ENCODE measurements at regions of chr17 and their contacts with region 1.

Region 1: GRCh38 chr17:50783193-50783660 is 15.9 kb upstream of the ANKRD40CL start:
- DNase-seq: peak; percentile 74 to 94 (median 89)
- ATAC-seq: peak; percentile 85 to 95 (median 92)
- H3K4me3 ChIP-seq: no peak overlapping the region
- H3K27ac ChIP-seq: no peak overlapping the region
- H3K4me1 ChIP-seq: peaks cover 0 to 10% (median 9%) of the 10 kb centered on the region in 3 donors
- H3K27me3 ChIP-seq: no peaks in the 10 kb centered on the region
- CTCF ChIP-seq: peak; percentile 94 to 98 (median 97)

Region 2: GRCh38 chr17:50816771-50817751 is 33.8 kb after region 1 on chr17:
- intact Hi-C with region 1: no loop called
- DNase-seq: peak in 5 of 6 donors; percentile 30 to 85 (median 60)
- ATAC-seq: peak; percentile 73 to 91 (median 83)
- H3K4me3 ChIP-seq: peak overlapping the region in 2 of 4 donors; percentile 18 to 22
- H3K27ac ChIP-seq: no peak overlapping the region
- H3K4me1 ChIP-seq: no peaks in the 10 kb centered on the region
- H3K27me3 ChIP-seq: no peaks in the 10 kb centered on the region
- CTCF ChIP-seq: peak; percentile 62 to 74 (median 68)

Region 3: DNA sequence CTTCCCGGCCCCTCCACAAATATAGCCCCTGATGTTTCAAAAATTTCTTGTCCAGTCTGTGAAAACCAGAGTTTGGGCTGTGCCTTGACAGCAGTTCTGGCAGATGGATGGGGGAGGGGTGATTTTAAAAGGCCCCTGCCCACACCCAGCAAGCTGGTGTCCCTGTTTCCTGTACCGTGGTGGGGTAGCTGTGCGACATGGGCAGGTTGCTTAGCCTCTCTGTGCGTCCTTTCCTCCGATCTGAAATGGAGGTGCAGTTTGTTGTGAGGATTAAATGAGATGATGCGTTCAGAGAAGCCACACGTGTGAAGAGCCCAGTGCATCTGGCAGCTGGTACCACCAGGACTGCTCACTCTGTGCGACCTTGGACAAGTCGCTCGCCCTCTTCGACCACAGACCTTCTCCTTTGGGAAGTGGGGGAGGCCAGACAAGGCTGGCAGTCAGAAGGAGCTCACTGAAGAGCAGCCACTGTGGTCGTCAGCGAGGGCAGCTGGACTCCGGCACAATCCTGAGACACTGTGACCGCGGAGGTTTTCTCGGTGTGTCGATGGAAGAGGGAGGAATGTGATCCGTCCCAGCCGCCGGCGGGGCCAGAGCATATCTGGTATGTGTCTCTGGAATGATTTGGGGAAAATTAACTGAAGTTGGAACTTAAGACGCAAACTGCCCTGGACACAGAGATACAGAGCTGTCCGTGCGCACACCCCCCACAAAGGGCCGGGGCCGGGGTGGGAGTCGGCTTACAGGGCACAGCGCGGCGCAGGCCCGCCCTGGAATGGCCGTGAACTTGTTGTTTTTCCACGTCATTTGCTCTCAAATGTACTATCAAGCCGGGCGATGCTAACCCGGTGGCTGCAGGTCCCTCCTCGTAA is 51.4 kb after region 1 on chr17:
- intact Hi-C with region 1: loop called in 1 of 3 experiments (anchors 10 kb)
- DNase-seq: peak in 1 of 6 donors; percentile 64
- ATAC-seq: peak in 3 of 4 donors; percentile 17 to 22 (median 18)
- H3K4me3 ChIP-seq: peak overlapping the region in 1 of 4 donors; percentile 22
- H3K27ac ChIP-seq: no peak overlapping the region
- H3K4me1 ChIP-seq: peaks cover 0 to 3% (median 0%) of the 10 kb centered on the region in 3 donors
- H3K27me3 ChIP-seq: no peaks in the 10 kb centered on the region
- CTCF ChIP-seq: no peak

Region 4: GRCh38 chr17:50841949-50842354 is 58.7 kb after region 1 on chr17:
- intact Hi-C with region 1: loop called (anchors 5 to 10 kb)
- DNase-seq: peak; percentile 59 to 85 (median 76)
- ATAC-seq: peak; percentile 80 to 94 (median 91)
- H3K4me3 ChIP-seq: no peak overlapping the region
- H3K27ac ChIP-seq: no peak overlapping the region
- H3K4me1 ChIP-seq: no peaks in the 10 kb centered on the region
- H3K27me3 ChIP-seq: no peaks in the 10 kb centered on the region
- CTCF ChIP-seq: peak; percentile 54 to 73 (median 64)

Region 5: GRCh38 chr17:50949989-50950881 is 167.0 kb after region 1 on chr17:
- intact Hi-C with region 1: loop called in 2 of 3 experiments (anchors 10 kb)
- DNase-seq: peak; percentile 78 to 93 (median 84)
- ATAC-seq: peak; percentile 65 to 88 (median 80)
- H3K4me3 ChIP-seq: peak overlapping the region in 1 of 4 donors; percentile 17
- H3K27ac ChIP-seq: peak overlapping the region; percentile 89 to 97 (median 92)
- H3K4me1 ChIP-seq: peaks cover 24 to 33% (median 32%) of the 10 kb centered on the region in 3 donors
- H3K27me3 ChIP-seq: no peaks in the 10 kb centered on the region
- CTCF ChIP-seq: peak; percentile 31 to 76 (median 63)

Measured in pancreas (tissue), 10 donors.